CD4-positive, alpha-beta T cell (primary cell): ENCODE measurements at regions of chr18 and their contacts with region 1.

Region 1: DNA sequence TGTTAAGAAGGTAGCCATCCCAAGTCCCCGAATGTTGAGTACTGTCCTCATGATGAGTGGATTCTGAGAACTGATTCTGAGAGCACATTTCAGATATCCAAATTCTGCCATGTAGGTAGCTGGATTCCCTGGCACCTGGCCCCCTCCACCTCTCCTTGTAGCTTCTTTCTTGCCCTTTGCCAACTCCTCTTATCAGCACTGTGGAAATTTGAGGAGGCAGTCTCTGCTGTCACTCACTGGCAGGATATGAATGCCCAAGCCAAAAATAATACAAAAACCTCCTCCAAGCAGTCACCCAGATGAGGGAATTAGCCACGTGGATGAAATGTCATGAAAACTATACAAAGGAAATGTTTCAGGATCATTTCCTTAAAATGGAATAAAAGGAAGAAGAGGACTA is 276.8 kb downstream of the SETBP1 start:
- DNase-seq: no peak
- ATAC-seq: no peak
- H3K4me3 ChIP-seq: no peak overlapping the region
- H3K4me3 Mint-ChIP-seq: no peak overlapping the region
- H3K27ac ChIP-seq: no peak overlapping the region
- H3K27ac Mint-ChIP-seq: no peak overlapping the region
- H3K4me1 ChIP-seq: no peaks in the 10 kb centered on the region
- H3K4me1 Mint-ChIP-seq: no peaks in the 10 kb centered on the region
- H3K27me3 ChIP-seq: no peaks in the 10 kb centered on the region
- H3K27me3 Mint-ChIP-seq: no peaks in the 10 kb centered on the region
- CTCF ChIP-seq: no peak

Region 2: DNA sequence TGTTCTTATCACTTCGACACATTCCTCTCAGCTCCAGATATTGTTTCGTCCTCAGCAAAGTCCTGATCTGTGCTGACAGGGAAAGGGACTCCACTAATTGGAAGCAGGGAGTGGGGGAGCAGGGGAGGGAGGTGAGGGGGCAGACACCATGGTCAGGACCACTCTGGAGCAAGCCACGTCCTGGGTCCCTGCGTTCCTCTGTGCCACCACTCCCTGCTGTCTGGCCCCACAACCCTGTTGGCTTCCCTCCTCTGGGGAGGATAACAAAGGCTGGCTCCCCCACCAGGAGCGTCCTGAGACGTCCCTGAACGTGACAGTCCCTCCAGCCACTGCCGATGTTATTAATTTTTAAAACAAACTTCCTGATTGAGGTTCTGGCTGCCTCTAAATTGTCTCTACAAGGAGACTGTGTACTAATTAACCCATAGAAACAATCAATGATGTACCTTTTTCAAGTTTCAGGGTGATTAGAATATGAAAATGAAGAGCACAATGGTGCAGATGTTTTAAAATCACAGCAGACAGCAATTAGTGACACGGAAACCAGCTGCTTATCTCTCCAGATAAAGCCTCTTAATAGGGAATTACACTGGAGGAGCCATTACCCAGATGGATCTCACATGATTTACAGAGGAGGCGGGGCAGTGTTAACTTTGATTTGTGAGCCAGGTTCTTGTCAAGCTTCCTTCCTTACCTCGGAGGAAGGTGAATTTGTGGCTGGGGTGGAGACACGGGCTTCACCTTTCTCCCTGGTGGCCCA is 19.3 kb before region 1 on chr18:
- CTCF ChIA-PET with region 1: no interaction called
- POLR2A ChIA-PET with region 1: no interaction called
- intact Hi-C with region 1: loop called in 1 of 2 experiments (anchors 2 kb)
- DNase-seq: no peak
- ATAC-seq: no peak
- H3K4me3 ChIP-seq: no peak overlapping the region
- H3K4me3 Mint-ChIP-seq: no peak overlapping the region
- H3K27ac ChIP-seq: no peak overlapping the region
- H3K27ac Mint-ChIP-seq: no peak overlapping the region
- H3K4me1 ChIP-seq: peaks cover 3% of the 10 kb centered on the region
- H3K4me1 Mint-ChIP-seq: no peaks in the 10 kb centered on the region
- H3K27me3 ChIP-seq: peaks cover 0 to 2% of the 10 kb centered on the region in 2 experiments
- H3K27me3 Mint-ChIP-seq: peaks cover 15% of the 10 kb centered on the region
- CTCF ChIP-seq: no peak